CD8-positive, alpha-beta memory T cell (primary cell): ENCODE measurements at regions of chr11 and their contacts with region 1.

Region 1: DNA sequence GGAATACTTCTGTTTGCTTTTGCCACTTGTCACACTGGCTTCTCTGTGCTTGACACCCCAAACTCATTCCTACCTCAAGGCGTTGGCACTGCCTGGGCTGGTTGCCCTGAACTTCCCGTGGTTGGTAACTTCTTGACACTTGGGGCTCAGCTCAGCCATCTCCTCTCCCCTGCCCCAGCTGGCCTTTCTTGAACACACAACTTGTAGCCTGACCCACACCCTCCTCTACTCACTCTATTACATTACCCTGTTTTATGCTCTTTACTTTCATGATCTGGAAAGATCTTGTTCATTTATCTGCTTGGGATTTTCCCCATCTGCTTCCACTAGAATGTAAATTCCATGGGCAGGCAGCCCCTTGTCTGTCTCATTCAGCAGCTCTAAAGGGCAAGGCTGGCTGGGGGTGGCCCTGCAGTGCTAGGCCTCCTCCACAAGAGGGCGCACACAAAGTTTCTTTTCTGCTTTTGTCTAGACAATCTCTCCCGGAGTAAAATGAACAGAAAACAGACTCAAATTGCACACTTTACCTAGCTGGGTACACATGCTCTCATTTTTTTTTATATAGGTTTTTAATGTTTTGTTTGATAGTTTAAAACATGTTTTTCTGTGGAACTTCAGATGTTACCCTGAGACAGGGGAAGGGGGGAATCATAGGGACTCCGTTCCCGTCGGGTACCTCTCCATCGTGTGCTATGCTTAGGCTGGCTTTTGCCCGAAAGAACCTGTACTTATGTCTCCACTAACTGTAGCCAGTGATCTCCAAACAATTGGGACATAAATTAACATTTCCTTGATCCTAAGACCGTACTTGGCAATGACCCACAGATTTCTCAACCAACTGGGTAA is 16.4 kb upstream of the MRGPRX2 start:
- DNase-seq: peak; percentile 26 to 65 (median 46)
- H3K4me3 ChIP-seq: no peak overlapping the region
- H3K4me3 Mint-ChIP-seq: no peak overlapping the region
- H3K27ac ChIP-seq: no peak overlapping the region
- H3K27ac Mint-ChIP-seq: peak overlapping the region in 1 of 8 donors; percentile 27
- H3K4me1 ChIP-seq: no peaks in the 10 kb centered on the region
- H3K4me1 Mint-ChIP-seq: peaks cover 0 to 4% (median 0%) of the 10 kb centered on the region in 3 donors
- H3K27me3 ChIP-seq: peaks cover 3% of the 10 kb centered on the region
- H3K27me3 Mint-ChIP-seq: peaks cover 4 to 5% of the 10 kb centered on the region in 2 donors

Region 2: DNA sequence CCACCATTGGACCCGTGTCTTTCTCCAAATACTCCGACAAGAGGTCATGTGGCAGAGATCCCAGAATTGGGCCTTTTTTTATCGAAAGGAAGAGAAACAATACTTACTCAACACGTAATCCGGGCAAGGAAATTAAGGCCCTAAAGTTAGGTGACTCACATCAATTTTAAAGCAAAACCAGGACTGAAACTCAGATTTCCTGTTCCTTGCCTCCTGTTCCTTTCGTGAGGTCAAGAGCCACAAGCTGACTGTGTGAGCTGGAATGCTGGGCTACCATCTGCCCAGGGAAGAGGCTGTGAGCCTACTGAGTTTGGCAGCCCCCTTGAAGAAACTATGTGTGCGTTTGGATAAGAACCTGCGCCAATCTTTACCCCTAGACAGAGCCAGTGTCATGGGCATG is 10.7 kb after region 1 on chr11:
- CTCF ChIA-PET with region 1: interaction called, 20 read pairs
- POLR2A ChIA-PET with region 1: no interaction called
- DNase-seq: no peak
- H3K4me3 ChIP-seq: no peak overlapping the region
- H3K4me3 Mint-ChIP-seq: no peak overlapping the region
- H3K27ac ChIP-seq: no peak overlapping the region
- H3K27ac Mint-ChIP-seq: no peak overlapping the region
- H3K4me1 ChIP-seq: no peaks in the 10 kb centered on the region
- H3K4me1 Mint-ChIP-seq: no peaks in the 10 kb centered on the region
- H3K27me3 ChIP-seq: no peaks in the 10 kb centered on the region
- H3K27me3 Mint-ChIP-seq: peaks cover 10 to 29% of the 10 kb centered on the region in 2 donors

Region 3: DNA sequence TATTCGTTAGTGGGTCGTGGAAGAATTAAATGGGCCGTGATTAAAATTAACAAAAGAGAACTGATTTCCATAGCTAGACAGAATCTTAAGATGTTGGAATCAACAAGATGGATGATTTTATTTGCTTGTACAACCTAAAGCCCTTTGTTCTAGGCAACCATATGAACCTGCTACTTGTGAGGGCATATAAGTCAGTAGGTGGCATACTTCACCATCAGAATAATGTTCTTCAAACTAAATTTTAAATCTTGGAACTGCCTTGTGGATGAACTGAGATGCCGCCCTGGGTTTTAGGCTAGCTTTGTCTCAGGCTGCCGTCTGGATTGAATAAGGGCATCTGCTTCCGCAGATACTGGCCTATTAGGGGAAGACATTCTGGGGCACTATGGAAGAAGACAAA is 83.9 kb after region 1 on chr11:
- CTCF ChIA-PET with region 1: no interaction called
- POLR2A ChIA-PET with region 1: no interaction called
- DNase-seq: no peak
- H3K4me3 ChIP-seq: no peak overlapping the region
- H3K4me3 Mint-ChIP-seq: no peak overlapping the region
- H3K27ac ChIP-seq: no peak overlapping the region
- H3K27ac Mint-ChIP-seq: no peak overlapping the region
- H3K4me1 ChIP-seq: no peaks in the 10 kb centered on the region
- H3K4me1 Mint-ChIP-seq: peaks cover 0 to 3% (median 0%) of the 10 kb centered on the region in 3 donors
- H3K27me3 ChIP-seq: no peaks in the 10 kb centered on the region
- H3K27me3 Mint-ChIP-seq: no peaks in the 10 kb centered on the region